ENCODE measurements at regions of chr2 and their contacts with region 1.

Region 1: DNA sequence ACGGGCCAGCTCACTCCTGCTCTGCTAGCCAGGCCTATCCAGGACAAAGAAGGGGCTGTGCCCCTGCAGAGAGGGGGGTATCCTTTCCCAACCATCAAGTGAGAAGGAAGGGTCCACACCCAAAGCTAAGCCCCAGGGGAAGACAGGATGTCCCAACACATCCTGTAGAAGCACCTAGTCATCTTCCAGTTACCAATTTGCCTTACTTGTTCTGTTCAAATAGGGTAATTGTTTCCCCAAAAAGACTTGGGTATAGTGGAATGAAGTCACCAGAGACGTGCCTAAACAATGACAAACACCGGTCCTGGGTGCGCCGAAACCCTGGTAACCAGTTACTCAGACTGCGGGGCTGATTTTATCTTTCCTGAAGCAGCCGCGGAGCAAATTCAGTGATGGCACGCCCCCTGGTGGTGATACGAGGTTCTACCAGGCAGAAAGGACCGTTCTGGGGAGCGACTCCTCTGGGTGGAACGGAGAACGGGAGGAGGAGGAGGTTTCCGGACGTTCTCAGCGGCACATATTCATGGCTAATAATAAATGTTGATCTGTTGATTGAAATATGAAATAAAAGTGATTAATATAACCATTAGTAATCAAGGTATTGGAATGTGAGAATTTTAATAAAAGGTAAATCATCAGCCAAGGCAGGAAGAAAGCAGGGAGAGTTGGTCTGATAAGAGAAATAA is 109.3 kb upstream of the STON1 start:
- DNase-seq: peak; percentile 95
- H3K4me3 ChIP-seq: peak overlapping the region; percentile 5 to 27 (median 10)
- H3K27ac ChIP-seq: peak overlapping the region in 1 of 4 donors; percentile 30
- H3K4me1 ChIP-seq: peaks cover 16 to 20% (median 18%) of the 10 kb centered on the region in 4 donors
- H3K27me3 ChIP-seq: no peaks in the 10 kb centered on the region
- CTCF ChIP-seq: peak; percentile 94 to 98 (median 97)
- EP300 ChIP-seq: no peak
- POLR2A ChIP-seq: no peak

Region 2: DNA sequence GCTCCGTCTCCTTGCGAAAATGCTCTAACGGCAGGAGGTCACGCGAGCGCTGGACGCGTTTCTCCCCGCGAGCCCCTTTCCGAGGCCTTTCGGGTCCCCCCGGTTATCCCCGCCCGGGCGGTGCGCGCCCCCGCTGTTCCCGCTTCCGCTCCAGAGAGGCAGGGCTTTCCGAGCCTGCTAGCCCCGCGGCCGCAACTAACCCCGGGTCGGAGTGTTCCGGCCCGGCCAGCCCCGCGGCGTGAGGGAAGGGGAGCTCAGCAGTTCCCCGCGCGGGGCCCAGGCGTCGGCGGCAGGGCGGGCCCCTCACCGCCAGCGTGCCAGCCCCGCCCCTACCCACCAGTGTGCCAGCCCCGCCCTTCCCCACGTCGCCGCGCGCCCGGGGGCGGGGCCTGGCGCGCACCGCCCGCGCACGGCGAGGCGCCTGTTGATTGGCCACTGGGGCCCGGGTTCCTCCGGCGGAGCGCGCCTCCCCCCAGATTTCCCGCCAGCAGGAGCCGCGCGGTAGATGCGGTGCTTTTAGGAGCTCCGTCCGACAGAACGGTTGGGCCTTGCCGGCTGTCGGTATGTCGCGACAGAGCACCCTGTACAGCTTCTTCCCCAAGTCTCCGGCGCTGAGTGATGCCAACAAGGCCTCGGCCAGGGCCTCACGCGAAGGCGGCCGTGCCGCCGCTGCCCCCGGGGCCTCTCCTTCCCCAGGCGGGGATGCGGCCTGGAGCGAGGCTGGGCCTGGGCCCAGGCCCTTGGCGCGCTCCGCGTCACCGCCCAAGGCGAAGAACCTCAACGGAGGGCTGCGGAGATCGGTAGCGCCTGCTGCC is 637.8 kb before region 1 on chr2 and contains the start of gene MSH6:
- intact Hi-C with region 1: loop called (anchors 10 kb)
- DNase-seq: peak; percentile 96
- H3K4me3 ChIP-seq: peak within 1 kb of the TSS; percentile 77 to 99 (median 84)
- H3K27ac ChIP-seq: peak within 1 kb of the TSS; percentile 92 to 99 (median 94)
- H3K4me1 ChIP-seq: peaks cover 12 to 38% (median 31%) of the 10 kb centered on the region in 4 donors
- H3K27me3 ChIP-seq: no peaks in the 10 kb centered on the region
- CTCF ChIP-seq: peak in 1 of 3 experiments; percentile 17
- EP300 ChIP-seq: no peak
- POLR2A ChIP-seq: peak; percentile 67
- total RNA-seq, gene MSH6: 28.2 to 47.0 (median 39.6) TPM

Region 3: DNA sequence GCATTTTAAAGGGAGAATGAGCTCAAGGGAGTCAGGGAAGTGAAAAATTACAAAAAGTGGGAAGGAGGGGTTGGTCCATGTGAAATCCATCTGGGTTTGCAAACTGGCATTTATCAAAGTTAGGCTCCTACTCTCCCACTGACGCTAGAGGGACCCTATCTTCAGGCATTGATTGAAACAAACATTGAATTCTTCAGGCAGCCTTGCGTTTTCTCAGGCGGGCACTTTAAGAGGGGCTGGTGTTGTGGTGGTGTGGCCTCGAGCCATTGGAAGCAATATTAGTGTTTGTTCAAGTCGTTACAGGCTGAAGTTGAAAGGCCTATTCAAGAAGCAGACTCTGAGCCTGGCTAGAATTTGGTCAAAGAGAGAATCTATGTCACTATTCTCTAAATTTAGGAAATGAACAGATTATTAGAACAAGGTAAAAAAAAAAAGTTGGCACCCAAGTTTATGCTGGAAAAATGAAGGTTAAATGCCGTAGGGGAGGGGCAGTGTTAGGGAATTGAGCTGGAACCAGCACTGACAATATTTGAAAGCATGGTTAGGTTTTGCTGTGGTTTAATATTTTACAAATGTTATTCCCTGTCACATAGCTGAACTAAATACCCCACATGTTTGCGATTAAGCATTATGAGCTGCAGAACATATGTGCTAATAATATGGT is 146.1 kb after region 1 on chr2:
- intact Hi-C with region 1: no loop called
- DNase-seq: no peak
- H3K4me3 ChIP-seq: peak overlapping the region in 1 of 4 donors; percentile 7
- H3K27ac ChIP-seq: peak overlapping the region; percentile 48 to 77 (median 57)
- H3K4me1 ChIP-seq: peaks cover 16 to 75% (median 67%) of the 10 kb centered on the region in 4 donors
- H3K27me3 ChIP-seq: no peaks in the 10 kb centered on the region
- CTCF ChIP-seq: peak in 2 of 3 experiments; percentile 10 to 44
- EP300 ChIP-seq: no peak
- POLR2A ChIP-seq: no peak

Measured in esophagus muscularis mucosa (tissue), 4 donors.